ENCODE measurements at regions of chr17 and their contacts with region 1.

Region 1: DNA sequence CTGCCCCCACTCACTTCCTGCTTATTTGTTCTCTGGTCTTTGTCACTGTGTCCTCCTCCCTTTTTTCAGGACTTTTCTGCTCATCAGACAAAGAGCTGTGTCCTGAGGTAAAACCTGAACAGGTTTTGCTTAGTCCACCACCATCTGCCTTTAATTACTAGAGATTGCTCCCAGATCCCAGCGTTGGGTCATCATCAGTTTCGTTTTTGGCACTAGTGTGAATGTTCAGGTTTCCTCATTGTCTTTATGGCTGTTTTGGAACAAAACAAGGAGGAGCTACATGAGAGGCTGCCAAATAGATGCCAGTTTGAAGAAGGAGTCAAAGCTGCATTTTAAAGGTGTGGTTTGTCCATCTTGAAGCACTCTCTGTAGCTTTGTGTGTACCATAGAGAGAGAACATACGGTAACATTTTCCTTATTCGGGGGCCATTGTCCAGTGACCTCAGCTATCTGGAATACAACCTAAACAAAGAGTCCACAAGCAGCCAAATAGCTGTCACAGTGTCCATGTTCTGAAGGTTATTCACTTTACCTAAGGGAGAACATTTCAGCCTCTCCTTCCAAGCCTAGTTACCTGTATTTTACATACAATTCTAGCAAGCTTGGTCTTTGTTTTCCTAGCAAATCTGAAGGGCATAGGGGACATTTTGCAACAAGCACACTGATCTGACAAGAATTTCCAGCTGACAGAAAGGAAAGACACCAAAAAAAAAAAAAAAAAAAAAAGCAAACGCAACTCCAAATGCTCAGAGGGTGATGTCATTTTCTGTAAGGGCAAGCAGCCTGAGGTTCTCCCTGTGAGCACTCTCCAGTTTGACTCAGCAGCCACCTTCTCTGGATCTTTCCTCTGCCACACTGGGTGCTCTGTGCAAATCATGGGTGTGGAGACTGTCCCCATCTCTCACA is 196.1 kb downstream of the NTN1 start:
- DNase-seq: no peak
- ATAC-seq: peak; percentile 65
- H3K4me3 ChIP-seq: no peak overlapping the region
- H3K27ac ChIP-seq: peak overlapping the region; percentile 1 to 25
- H3K4me1 ChIP-seq: no peaks in the 10 kb centered on the region
- H3K27me3 ChIP-seq: no peaks in the 10 kb centered on the region

Region 2: GRCh38 chr17:9169116-9169515 is 48.3 kb before region 1 on chr17:
- intact Hi-C with region 1: loop called in 1 of 2 experiments (anchors 5 kb)
- DNase-seq: no peak
- ATAC-seq: no peak
- H3K4me3 ChIP-seq: no peak overlapping the region
- H3K27ac ChIP-seq: no peak overlapping the region
- H3K4me1 ChIP-seq: peaks cover 0 to 3% of the 10 kb centered on the region in 2 donors
- H3K27me3 ChIP-seq: no peaks in the 10 kb centered on the region

Region 3: GRCh38 chr17:9371019-9371418 is 153.6 kb after region 1 on chr17:
- intact Hi-C with region 1: no loop called
- DNase-seq: no peak
- ATAC-seq: no peak
- H3K4me3 ChIP-seq: no peak overlapping the region
- H3K27ac ChIP-seq: no peak overlapping the region
- H3K4me1 ChIP-seq: no peaks in the 10 kb centered on the region
- H3K27me3 ChIP-seq: no peaks in the 10 kb centered on the region

Measured in aorta (tissue), 5 donors.